B cell (primary cell): ENCODE measurements at regions of chr12 and their contacts with region 1.

Region 1: GRCh38 chr12:50986966-50987737 is 34.8 kb downstream of the HIGD1C start:
- DNase-seq: peak; percentile 65
- ATAC-seq: peak; percentile 80
- H3K4me3 ChIP-seq: no peak overlapping the region
- H3K4me3 Mint-ChIP-seq: no peak overlapping the region
- H3K27ac ChIP-seq: no peak overlapping the region
- H3K27ac Mint-ChIP-seq: no peak overlapping the region
- H3K4me1 ChIP-seq: peaks cover 0 to 2% of the 10 kb centered on the region in 2 donors
- H3K4me1 Mint-ChIP-seq: peaks cover 6% of the 10 kb centered on the region
- H3K27me3 ChIP-seq: no peaks in the 10 kb centered on the region
- H3K27me3 Mint-ChIP-seq: no peaks in the 10 kb centered on the region
- CTCF ChIP-seq: peak; percentile 40

Region 2: GRCh38 chr12:50425589-50426258 is 561.4 kb before region 1 on chr12:
- CTCF ChIA-PET with region 1: no interaction called
- POLR2A ChIA-PET with region 1: no interaction called
- intact Hi-C with region 1: no loop called
- DNase-seq: no peak
- ATAC-seq: no peak
- H3K4me3 ChIP-seq: no peak overlapping the region
- H3K4me3 Mint-ChIP-seq: no peak overlapping the region
- H3K27ac ChIP-seq: no peak overlapping the region
- H3K27ac Mint-ChIP-seq: no peak overlapping the region
- H3K4me1 ChIP-seq: no peaks in the 10 kb centered on the region
- H3K4me1 Mint-ChIP-seq: peaks cover 3% of the 10 kb centered on the region
- H3K27me3 ChIP-seq: no peaks in the 10 kb centered on the region
- H3K27me3 Mint-ChIP-seq: no peaks in the 10 kb centered on the region
- CTCF ChIP-seq: no peak

Region 3: GRCh38 chr12:50614167-50614759 is 372.9 kb before region 1 on chr12:
- CTCF ChIA-PET with region 1: no interaction called
- POLR2A ChIA-PET with region 1: no interaction called
- intact Hi-C with region 1: no loop called
- DNase-seq: no peak
- ATAC-seq: no peak
- H3K4me3 ChIP-seq: no peak overlapping the region
- H3K4me3 Mint-ChIP-seq: no peak overlapping the region
- H3K27ac ChIP-seq: no peak overlapping the region
- H3K27ac Mint-ChIP-seq: no peak overlapping the region
- H3K4me1 ChIP-seq: peaks cover 0 to 11% of the 10 kb centered on the region in 2 donors
- H3K4me1 Mint-ChIP-seq: peaks cover 38% of the 10 kb centered on the region
- H3K27me3 ChIP-seq: no peaks in the 10 kb centered on the region
- H3K27me3 Mint-ChIP-seq: no peaks in the 10 kb centered on the region
- CTCF ChIP-seq: no peak

Region 4: DNA sequence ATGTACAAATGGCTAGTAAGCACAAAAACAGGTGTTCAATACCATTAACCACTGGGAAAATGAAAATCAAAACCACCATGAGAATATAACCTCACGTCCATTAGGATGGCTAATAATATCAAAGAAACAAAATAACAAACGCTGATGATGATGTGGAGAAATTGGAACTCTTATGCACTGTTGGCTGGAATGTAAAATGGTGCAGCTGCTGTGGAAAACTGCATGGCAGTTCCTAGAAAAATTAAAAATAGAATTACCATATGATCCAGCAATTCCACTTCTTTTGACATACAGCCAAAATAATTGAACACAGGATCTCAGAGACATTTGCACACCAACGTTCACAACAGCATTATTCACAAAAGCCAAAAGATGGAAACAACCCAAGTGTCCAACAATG is 92.9 kb before region 1 on chr12:
- CTCF ChIA-PET with region 1: interaction called, 4 read pairs
- POLR2A ChIA-PET with region 1: no interaction called
- intact Hi-C with region 1: loop called (anchors 10 kb)
- DNase-seq: no peak
- ATAC-seq: no peak
- H3K4me3 ChIP-seq: no peak overlapping the region
- H3K4me3 Mint-ChIP-seq: no peak overlapping the region
- H3K27ac ChIP-seq: no peak overlapping the region
- H3K27ac Mint-ChIP-seq: no peak overlapping the region
- H3K4me1 ChIP-seq: peaks cover 6% of the 10 kb centered on the region in 2 donors
- H3K4me1 Mint-ChIP-seq: peaks cover 8% of the 10 kb centered on the region
- H3K27me3 ChIP-seq: no peaks in the 10 kb centered on the region
- H3K27me3 Mint-ChIP-seq: no peaks in the 10 kb centered on the region
- CTCF ChIP-seq: no peak

Region 5: DNA sequence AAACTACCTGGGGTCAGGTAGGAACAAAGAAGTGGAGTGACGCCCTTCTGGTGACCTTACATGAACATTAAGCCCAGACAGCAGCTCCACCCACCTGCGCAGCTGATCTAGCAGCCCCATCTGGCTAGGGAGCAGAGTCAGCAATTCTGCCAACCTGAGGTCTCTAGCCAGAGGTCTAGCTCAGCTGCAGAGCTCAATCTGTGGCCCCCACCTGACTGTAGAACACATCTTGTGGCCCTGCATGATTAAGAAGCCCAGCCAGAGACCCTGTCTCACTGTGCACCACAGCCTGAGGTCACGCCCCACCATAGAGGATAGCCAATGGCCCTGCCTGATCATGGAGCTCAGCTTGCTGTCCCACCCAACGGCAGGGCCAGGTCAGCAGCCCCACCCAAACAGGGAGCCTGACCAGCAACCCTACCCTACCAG is 85.5 kb before region 1 on chr12:
- CTCF ChIA-PET with region 1: interaction called, 10 read pairs
- POLR2A ChIA-PET with region 1: no interaction called
- intact Hi-C with region 1: loop called (anchors 10 kb)
- DNase-seq: no peak
- ATAC-seq: no peak
- H3K4me3 ChIP-seq: no peak overlapping the region
- H3K4me3 Mint-ChIP-seq: no peak overlapping the region
- H3K27ac ChIP-seq: no peak overlapping the region
- H3K27ac Mint-ChIP-seq: no peak overlapping the region
- H3K4me1 ChIP-seq: no peaks in the 10 kb centered on the region
- H3K4me1 Mint-ChIP-seq: no peaks in the 10 kb centered on the region
- H3K27me3 ChIP-seq: no peaks in the 10 kb centered on the region
- H3K27me3 Mint-ChIP-seq: no peaks in the 10 kb centered on the region
- CTCF ChIP-seq: no peak

Region 6: DNA sequence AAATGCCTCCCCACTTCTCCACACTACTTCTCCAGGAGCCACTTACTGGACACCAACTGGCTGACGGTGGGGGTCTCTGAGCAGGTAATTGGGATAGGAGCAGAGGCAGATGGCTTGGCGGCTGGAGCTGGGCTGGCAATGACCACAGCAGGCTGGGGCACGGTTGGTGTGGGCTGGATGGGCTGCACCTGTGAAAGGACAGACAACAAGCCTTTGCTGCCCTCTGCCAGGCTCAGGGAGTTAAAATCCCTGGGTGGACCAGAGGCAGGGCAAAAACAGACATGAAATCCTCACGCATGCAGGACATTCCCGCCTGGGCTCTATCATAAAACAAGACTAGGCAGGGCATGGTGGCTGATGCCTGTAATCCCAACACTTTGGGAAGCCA is 205.1 kb after region 1 on chr12:
- CTCF ChIA-PET with region 1: no interaction called
- POLR2A ChIA-PET with region 1: no interaction called
- intact Hi-C with region 1: no loop called
- DNase-seq: no peak
- ATAC-seq: no peak
- H3K4me3 ChIP-seq: no peak overlapping the region
- H3K4me3 Mint-ChIP-seq: no peak overlapping the region
- H3K27ac ChIP-seq: no peak overlapping the region
- H3K27ac Mint-ChIP-seq: no peak overlapping the region
- H3K4me1 ChIP-seq: peaks cover 17 to 21% of the 10 kb centered on the region in 2 donors
- H3K4me1 Mint-ChIP-seq: peaks cover 19% of the 10 kb centered on the region
- H3K27me3 ChIP-seq: no peaks in the 10 kb centered on the region
- H3K27me3 Mint-ChIP-seq: no peaks in the 10 kb centered on the region
- CTCF ChIP-seq: no peak